ENCODE measurements at regions of chr10 and their contacts with region 1.

Region 1: GRCh38 chr10:7866176-7866575 is 47.9 kb downstream of the TAF3 start:
- DNase-seq: no peak
- H3K4me3 ChIP-seq: no peak overlapping the region
- H3K27ac ChIP-seq: no peak overlapping the region
- H3K4me1 ChIP-seq: no peaks in the 10 kb centered on the region
- H3K27me3 ChIP-seq: no peaks in the 10 kb centered on the region
- CTCF ChIP-seq: no peak
- EP300 ChIP-seq: no peak
- POLR2A ChIP-seq: no peak

Region 2: GRCh38 chr10:9209105-9209798 is 1343.1 kb after region 1 on chr10:
- in situ Hi-C with region 1: loop called (anchors 10 to 25 kb)
- intact Hi-C with region 1: loop called (anchors 5 kb)
- DNase-seq: peak; percentile 53
- H3K4me3 ChIP-seq: no peak overlapping the region
- H3K27ac ChIP-seq: no peak overlapping the region
- H3K4me1 ChIP-seq: no peaks in the 10 kb centered on the region
- H3K27me3 ChIP-seq: peaks cover 5% of the 10 kb centered on the region
- CTCF ChIP-seq: peak; percentile 80 to 92 (median 88)
- EP300 ChIP-seq: no peak
- POLR2A ChIP-seq: no peak